ENCODE measurements at regions of chr10 and their contacts with region 1.

Region 1: GRCh38 chr10:74081192-74081803 is 69.3 kb downstream of the AP3M1 start:
- DNase-seq: peak; percentile 42
- H3K4me3 ChIP-seq: no peak overlapping the region
- H3K27ac ChIP-seq: peak overlapping the region in 1 of 4 donors; percentile 31
- H3K4me1 ChIP-seq: peaks cover 0 to 42% (median 13%) of the 10 kb centered on the region in 4 donors
- H3K27me3 ChIP-seq: no peaks in the 10 kb centered on the region
- CTCF ChIP-seq: peak; percentile 56 to 73 (median 64)
- EP300 ChIP-seq: no peak
- POLR2A ChIP-seq: no peak

Region 2: GRCh38 chr10:73848821-73849489 is 232.3 kb before region 1 on chr10:
- in situ Hi-C with region 1: no loop called
- intact Hi-C with region 1: no loop called
- DNase-seq: peak; percentile 90
- H3K4me3 ChIP-seq: no peak overlapping the region
- H3K27ac ChIP-seq: peak overlapping the region; percentile 72 to 91 (median 86)
- H3K4me1 ChIP-seq: peaks cover 5 to 27% (median 12%) of the 10 kb centered on the region in 4 donors
- H3K27me3 ChIP-seq: no peaks in the 10 kb centered on the region
- CTCF ChIP-seq: peak; percentile 99 to 100 (median 99)
- EP300 ChIP-seq: no peak
- POLR2A ChIP-seq: no peak

Region 3: DNA sequence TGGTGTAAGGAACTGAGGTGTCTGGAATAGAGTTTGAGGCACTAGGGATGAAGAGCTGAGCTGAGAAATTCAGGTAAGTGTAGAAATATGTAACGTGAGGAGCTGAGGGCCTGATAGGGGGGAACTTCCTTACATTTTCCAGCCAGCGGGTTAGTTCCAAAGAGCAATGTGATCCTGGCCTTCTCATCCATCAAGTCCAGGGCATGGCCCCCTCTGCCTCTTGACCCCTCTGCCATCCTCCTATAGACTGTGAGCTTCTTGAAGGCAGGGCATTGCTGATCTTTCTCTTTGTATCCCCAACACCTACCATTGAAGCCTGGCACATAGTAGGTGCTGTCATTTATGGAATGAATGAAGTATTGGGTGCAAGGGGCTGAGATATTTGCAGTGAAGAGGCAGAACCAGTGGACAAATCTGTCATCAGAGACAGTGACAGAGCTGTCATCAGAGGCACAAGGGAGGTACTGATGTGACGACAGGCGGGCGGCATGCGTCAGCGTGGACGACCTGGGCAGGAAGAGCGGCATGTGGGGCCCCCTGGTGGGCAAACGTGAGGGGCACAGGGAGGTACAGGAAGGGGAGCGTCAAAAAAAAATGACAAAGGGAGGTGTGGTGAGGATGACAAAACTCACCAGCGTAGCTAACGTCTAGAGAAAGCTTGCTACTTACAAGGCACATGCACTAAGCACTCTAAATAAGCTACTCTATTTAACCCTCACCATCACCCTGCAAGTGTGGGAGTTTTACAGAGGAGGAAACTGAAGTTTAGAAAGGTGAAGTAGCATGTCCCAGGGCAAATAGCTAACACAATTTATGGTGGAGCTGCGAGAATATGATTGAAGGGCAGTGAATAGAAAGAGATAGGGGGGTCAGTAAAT is 201.8 kb before region 1 on chr10:
- in situ Hi-C with region 1: loop called in 2 of 4 experiments (anchors 10 to 25 kb)
- intact Hi-C with region 1: no loop called
- DNase-seq: peak; percentile 93
- H3K4me3 ChIP-seq: no peak overlapping the region
- H3K27ac ChIP-seq: peak overlapping the region in 2 of 4 donors; percentile 30 to 33
- H3K4me1 ChIP-seq: peaks cover 4 to 18% (median 9%) of the 10 kb centered on the region in 4 donors
- H3K27me3 ChIP-seq: no peaks in the 10 kb centered on the region
- CTCF ChIP-seq: peak; percentile 90 to 99 (median 95)
- EP300 ChIP-seq: no peak
- POLR2A ChIP-seq: peak; percentile 7

Region 4: DNA sequence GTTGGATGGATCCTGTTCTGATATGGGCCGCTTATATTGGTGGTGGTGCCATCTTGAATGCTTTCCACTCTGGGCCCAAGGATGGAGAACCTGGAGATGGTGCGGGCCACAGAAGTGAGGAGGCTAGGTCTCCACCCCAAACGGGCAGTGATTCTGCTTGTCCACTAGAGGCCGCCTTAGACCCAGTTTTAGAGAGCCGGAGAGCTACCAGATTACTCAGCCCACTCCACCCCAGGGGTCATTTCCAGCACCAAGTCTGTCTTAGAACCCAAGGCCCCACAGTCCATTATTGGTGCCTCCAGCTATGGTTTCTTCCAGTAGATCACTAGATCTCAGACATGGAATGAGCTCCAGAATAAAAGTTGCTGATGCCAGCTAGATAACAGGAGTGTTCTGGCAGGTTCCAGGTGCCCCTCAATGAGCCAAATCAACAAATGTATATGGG is 195.2 kb before region 1 on chr10:
- in situ Hi-C with region 1: loop called in 3 of 4 experiments (anchors 10 to 25 kb)
- intact Hi-C with region 1: loop called (anchors 5 kb)
- DNase-seq: peak; percentile 72
- H3K4me3 ChIP-seq: no peak overlapping the region
- H3K27ac ChIP-seq: peak overlapping the region; percentile 78 to 85 (median 82)
- H3K4me1 ChIP-seq: peaks cover 15 to 31% (median 29%) of the 10 kb centered on the region in 4 donors
- H3K27me3 ChIP-seq: no peaks in the 10 kb centered on the region
- CTCF ChIP-seq: peak; percentile 78 to 92 (median 85)
- EP300 ChIP-seq: no peak
- POLR2A ChIP-seq: no peak

Region 5: DNA sequence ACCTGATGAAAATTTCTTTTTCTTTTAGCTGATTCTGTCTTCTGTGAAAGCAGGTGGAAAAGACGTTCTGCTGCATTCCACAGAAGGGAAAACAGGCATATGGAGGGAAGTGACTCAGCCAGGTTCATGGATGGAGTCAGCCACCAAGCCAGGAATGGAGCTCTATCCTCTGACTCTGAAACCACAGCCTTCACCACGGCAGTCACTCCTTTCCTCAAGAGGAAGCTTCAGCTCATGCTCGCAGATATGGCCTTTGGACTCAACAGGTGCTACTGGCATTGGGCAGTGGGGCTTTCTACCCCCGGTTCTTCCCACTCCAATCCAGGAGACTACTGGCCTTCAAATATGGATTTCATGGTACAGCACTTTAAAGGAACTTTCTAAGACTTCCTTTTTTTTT is 181.9 kb before region 1 on chr10:
- in situ Hi-C with region 1: loop called in 2 of 4 experiments (anchors 10 to 25 kb)
- intact Hi-C with region 1: no loop called
- DNase-seq: no peak
- H3K4me3 ChIP-seq: no peak overlapping the region
- H3K27ac ChIP-seq: no peak overlapping the region
- H3K4me1 ChIP-seq: peaks cover 0 to 6% (median 0%) of the 10 kb centered on the region in 4 donors
- H3K27me3 ChIP-seq: no peaks in the 10 kb centered on the region
- CTCF ChIP-seq: no peak
- EP300 ChIP-seq: no peak
- POLR2A ChIP-seq: no peak

Region 6: DNA sequence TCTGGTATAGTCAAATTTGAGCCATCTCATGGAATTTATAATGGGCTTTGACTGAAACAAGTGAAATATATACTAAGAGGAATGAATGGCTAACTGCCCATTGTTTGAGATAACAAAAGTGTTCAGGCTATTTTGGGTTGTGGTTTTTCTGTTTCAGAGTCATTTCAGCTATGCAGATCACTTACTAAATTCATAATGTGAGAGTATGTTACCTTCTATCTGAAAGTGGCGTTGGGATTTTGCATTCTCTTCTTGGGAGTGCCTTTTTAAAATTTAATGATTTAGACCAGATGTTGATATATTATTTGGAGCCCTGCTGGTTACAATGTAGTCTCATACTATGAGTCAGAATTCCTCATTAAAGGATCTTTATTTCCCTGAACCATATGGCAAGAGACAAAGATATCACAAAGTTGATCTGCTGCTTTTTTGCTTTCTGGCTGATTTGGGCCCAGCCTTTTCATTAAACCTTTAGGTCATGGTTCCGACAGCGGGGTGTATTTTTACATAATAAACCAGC is 73.0 kb before region 1 on chr10:
- in situ Hi-C with region 1: no loop called
- intact Hi-C with region 1: no loop called
- DNase-seq: no peak
- H3K4me3 ChIP-seq: no peak overlapping the region
- H3K27ac ChIP-seq: peak overlapping the region in 2 of 4 donors; percentile 6 to 22
- H3K4me1 ChIP-seq: peaks cover 3 to 61% (median 30%) of the 10 kb centered on the region in 4 donors
- H3K27me3 ChIP-seq: no peaks in the 10 kb centered on the region
- CTCF ChIP-seq: no peak
- EP300 ChIP-seq: no peak
- POLR2A ChIP-seq: no peak

Region 7: DNA sequence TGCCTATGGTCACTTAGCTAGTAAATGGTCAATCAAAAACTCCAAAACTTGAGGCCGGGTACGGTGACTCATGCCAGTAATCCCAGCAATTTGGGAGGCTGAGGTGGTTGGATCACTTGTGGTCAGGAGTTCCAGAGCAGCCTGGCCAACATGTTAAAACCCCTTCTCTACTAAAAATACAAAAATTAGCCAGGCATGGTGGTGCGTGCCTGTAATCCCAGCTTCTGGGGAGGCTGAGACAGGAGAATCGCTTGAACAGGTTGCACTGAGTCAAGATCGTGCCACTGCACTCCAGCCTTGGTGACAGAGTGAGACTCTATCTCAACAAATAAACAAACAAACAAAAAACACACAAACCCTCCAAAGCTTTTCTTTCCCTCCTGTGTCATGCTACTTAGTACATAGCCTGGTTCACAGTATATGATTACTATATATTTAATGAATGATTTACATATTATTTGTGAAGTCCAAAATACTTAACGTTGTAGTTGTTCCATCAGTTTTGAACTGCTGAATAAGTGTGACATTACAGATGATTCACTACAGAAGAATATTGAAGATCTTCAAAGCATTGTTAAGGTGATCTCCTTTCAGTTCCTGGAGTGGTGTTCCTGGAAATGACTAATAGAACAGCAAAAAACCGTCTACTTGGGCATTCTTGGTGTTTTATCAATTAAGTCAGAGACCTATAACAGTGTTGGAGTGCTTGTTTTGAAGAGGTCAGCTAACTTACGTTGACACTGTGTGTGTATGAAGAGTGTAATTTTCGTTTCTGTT is 142.6 kb after region 1 on chr10:
- in situ Hi-C with region 1: no loop called
- intact Hi-C with region 1: no loop called
- DNase-seq: no peak
- H3K4me3 ChIP-seq: no peak overlapping the region
- H3K27ac ChIP-seq: no peak overlapping the region
- H3K4me1 ChIP-seq: peaks cover 0 to 5% (median 0%) of the 10 kb centered on the region in 4 donors
- H3K27me3 ChIP-seq: no peaks in the 10 kb centered on the region
- CTCF ChIP-seq: no peak
- EP300 ChIP-seq: no peak
- POLR2A ChIP-seq: no peak